Activated CD4-positive, alpha-beta T cell treated with anti-CD3 and anti-CD28 coated beads for 36 hours (primary cell): ENCODE measurements at regions of chr19 and their contacts with region 1.

Region 1: GRCh38 chr19:40348125-40348913 is at the starts of genes C19orf47 and PLD3:
- DNase-seq: peak; percentile 100
- ATAC-seq: peak; percentile 97
- H3K4me3 Mint-ChIP-seq: peak within 1 kb of the TSS; percentile 96
- H3K27ac Mint-ChIP-seq: peak within 1 kb of the TSS; percentile 91
- H3K4me1 Mint-ChIP-seq: peaks cover 26% of the 10 kb centered on the region
- H3K27me3 Mint-ChIP-seq: no peaks in the 10 kb centered on the region
- total RNA-seq, gene C19orf47: 15.8 to 17.7 TPM
- total RNA-seq, gene PLD3: 57.8 to 69.1 TPM

Region 2: GRCh38 chr19:39341719-39342604 is 1006.4 kb before region 1 on chr19 and contains the start of gene SAMD4B:
- CTCF ChIA-PET with region 1: no interaction called
- POLR2A ChIA-PET with region 1: no interaction called
- intact Hi-C with region 1: loop called in 1 of 2 experiments (anchors 1 kb)
- DNase-seq: peak; percentile 100
- ATAC-seq: peak; percentile 90
- H3K4me3 Mint-ChIP-seq: peak within 1 kb of the TSS; percentile 83
- H3K27ac Mint-ChIP-seq: peak within 1 kb of the TSS; percentile 88
- H3K4me1 Mint-ChIP-seq: peaks cover 69% of the 10 kb centered on the region
- H3K27me3 Mint-ChIP-seq: no peaks in the 10 kb centered on the region
- total RNA-seq, gene SAMD4B: 45.2 to 46.9 TPM

Region 3: GRCh38 chr19:40190891-40191835 is 157.2 kb before region 1 on chr19 and contains the start of gene MAP3K10:
- CTCF ChIA-PET with region 1: no interaction called
- POLR2A ChIA-PET with region 1: no interaction called
- intact Hi-C with region 1: loop called in 1 of 2 experiments (anchors 1 kb)
- DNase-seq: peak; percentile 89
- ATAC-seq: peak; percentile 88
- H3K4me3 Mint-ChIP-seq: peak within 1 kb of the TSS; percentile 80
- H3K27ac Mint-ChIP-seq: peak within 1 kb of the TSS; percentile 92
- H3K4me1 Mint-ChIP-seq: peaks cover 20% of the 10 kb centered on the region
- H3K27me3 Mint-ChIP-seq: no peaks in the 10 kb centered on the region
- total RNA-seq, gene MAP3K10: 8.7 to 10.8 TPM

Region 4: GRCh38 chr19:40403262-40403984 is 55.1 kb after region 1 on chr19:
- CTCF ChIA-PET with region 1: interaction called, 3 read pairs
- POLR2A ChIA-PET with region 1: no interaction called
- intact Hi-C with region 1: loop called in 1 of 2 experiments (anchors 1 kb)
- DNase-seq: peak; percentile 94
- ATAC-seq: peak; percentile 67
- H3K4me3 Mint-ChIP-seq: peak overlapping the region; percentile 77
- H3K27ac Mint-ChIP-seq: peak overlapping the region; percentile 0
- H3K4me1 Mint-ChIP-seq: peaks cover 19% of the 10 kb centered on the region
- H3K27me3 Mint-ChIP-seq: no peaks in the 10 kb centered on the region

Region 5: DNA sequence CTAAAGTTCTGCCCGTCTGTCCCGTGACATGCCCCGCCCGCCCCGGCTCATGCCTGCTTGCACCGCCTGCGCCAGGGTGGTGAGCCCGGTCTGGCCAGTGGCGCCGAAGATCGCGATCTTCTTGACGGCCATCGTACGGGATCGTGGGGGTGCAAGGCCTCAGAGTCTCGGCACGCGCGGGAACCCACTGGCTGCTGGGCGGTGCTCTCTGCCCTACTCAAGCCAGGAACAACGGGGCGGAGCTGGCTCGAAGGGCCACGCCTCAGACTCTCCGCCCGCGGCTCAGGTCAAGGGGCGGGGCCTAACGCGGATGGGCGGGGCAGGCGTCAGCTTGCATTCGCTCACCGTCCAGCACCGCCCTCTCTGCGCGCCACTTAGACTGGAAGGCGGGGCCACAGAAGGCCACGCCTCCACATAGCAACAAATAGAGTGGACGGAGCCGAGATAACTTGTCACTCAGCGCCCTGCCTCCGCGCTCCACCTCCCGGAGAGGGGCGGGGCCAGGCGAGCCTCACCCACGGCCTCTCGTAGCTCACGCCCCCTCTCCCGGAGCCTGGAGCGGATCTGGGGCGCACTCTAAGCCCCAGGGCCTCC is 117.3 kb after region 1 on chr19 and contains the start of gene BLVRB:
- CTCF ChIA-PET with region 1: no interaction called
- POLR2A ChIA-PET with region 1: interaction called, 3 read pairs
- intact Hi-C with region 1: loop called (anchors 1 kb)
- DNase-seq: peak; percentile 100
- ATAC-seq: peak; percentile 84
- H3K4me3 Mint-ChIP-seq: peak within 1 kb of the TSS; percentile 77
- H3K27ac Mint-ChIP-seq: peak within 1 kb of the TSS; percentile 87
- H3K4me1 Mint-ChIP-seq: peaks cover 30% of the 10 kb centered on the region
- H3K27me3 Mint-ChIP-seq: peaks cover 11% of the 10 kb centered on the region
- total RNA-seq, gene BLVRB: 34.1 to 35.6 TPM

Region 6: GRCh38 chr19:40576585-40577451 is 228.5 kb after region 1 on chr19 and contains the start of gene SHKBP1:
- CTCF ChIA-PET with region 1: no interaction called
- POLR2A ChIA-PET with region 1: no interaction called
- intact Hi-C with region 1: loop called (anchors 2 kb)
- DNase-seq: peak; percentile 96
- ATAC-seq: peak; percentile 100
- H3K4me3 Mint-ChIP-seq: peak within 1 kb of the TSS; percentile 85
- H3K27ac Mint-ChIP-seq: peak within 1 kb of the TSS; percentile 74
- H3K4me1 Mint-ChIP-seq: peaks cover 16% of the 10 kb centered on the region
- H3K27me3 Mint-ChIP-seq: no peaks in the 10 kb centered on the region
- total RNA-seq, gene SHKBP1: 100 to 155 TPM

Region 7: DNA sequence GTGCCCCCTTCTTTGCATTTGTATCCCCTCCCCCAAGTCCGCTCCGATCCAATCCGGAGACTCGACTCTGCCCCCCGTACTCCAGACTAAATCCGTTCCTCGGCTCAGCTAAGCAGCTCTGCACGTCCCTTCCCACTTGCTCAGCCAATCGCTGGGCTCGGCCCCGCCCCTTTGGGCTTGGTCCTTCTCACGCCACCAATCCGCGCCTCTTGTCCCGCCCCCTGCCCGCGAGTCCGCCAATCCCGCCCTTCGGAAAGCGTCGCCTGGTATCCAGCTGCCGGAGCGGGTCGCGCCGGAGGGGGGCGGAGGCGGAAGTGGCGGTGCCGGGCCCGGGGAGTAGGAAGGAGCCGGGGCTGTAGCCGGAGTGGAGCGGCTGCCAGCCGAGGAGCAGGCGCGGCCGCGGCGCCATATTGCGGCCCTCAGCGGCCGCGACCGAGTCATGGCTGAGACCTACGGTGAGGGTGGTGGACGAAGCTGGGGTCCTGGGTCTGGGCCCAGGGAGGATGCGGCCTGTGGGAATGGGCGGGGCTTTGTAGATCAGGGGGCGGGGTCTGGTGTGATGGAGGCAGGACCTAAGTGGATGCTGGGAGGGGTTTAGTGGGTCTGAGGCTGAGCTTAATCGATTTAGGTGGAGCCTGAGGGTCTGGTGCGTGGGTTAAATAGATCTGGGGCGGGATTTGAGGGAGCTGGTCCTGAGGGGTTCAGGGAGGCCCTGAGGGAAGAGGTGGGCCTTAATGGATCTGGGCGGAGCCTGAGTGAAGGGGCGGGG is 429.8 kb after region 1 on chr19 and contains the start of gene RAB4B:
- CTCF ChIA-PET with region 1: no interaction called
- POLR2A ChIA-PET with region 1: no interaction called
- intact Hi-C with region 1: loop called in 1 of 2 experiments (anchors 1 kb)
- DNase-seq: peak; percentile 100
- ATAC-seq: peak; percentile 79
- H3K4me3 Mint-ChIP-seq: peak within 1 kb of the TSS; percentile 84
- H3K27ac Mint-ChIP-seq: peak within 1 kb of the TSS; percentile 94
- H3K4me1 Mint-ChIP-seq: peaks cover 38% of the 10 kb centered on the region
- H3K27me3 Mint-ChIP-seq: no peaks in the 10 kb centered on the region
- total RNA-seq, gene RAB4B: 26.4 to 33.7 TPM

Region 8: DNA sequence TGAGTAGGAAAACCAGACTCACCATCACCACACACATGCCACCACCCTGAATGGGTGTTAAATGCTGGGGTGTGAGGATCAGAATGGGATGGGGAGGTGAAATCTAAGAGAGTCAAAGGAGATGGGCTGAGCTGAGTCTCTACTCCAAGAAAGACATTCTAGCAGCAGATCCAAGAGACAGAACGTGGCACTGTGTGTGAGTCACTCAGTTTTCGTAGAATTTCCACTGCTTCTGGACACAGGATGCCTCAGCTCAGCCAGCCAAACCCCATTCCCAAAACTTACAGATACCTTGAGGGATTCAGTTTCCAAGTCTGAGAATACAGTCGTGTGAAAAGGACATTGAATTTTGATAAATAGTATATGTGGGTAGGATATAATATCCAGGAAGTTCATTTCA is 541.0 kb after region 1 on chr19:
- CTCF ChIA-PET with region 1: no interaction called
- POLR2A ChIA-PET with region 1: no interaction called
- intact Hi-C with region 1: no loop called
- DNase-seq: no peak
- ATAC-seq: no peak
- H3K4me3 Mint-ChIP-seq: no peak overlapping the region
- H3K27ac Mint-ChIP-seq: no peak overlapping the region
- H3K4me1 Mint-ChIP-seq: no peaks in the 10 kb centered on the region
- H3K27me3 Mint-ChIP-seq: peaks cover 15% of the 10 kb centered on the region

Region 9: GRCh38 chr19:41089955-41090354 is 741.6 kb after region 1 on chr19:
- CTCF ChIA-PET with region 1: no interaction called
- POLR2A ChIA-PET with region 1: no interaction called
- intact Hi-C with region 1: no loop called
- DNase-seq: peak; percentile 8
- ATAC-seq: no peak
- H3K4me3 Mint-ChIP-seq: no peak overlapping the region
- H3K27ac Mint-ChIP-seq: no peak overlapping the region
- H3K4me1 Mint-ChIP-seq: peaks cover 3% of the 10 kb centered on the region
- H3K27me3 Mint-ChIP-seq: peaks cover 48% of the 10 kb centered on the region